A673 (cell line): ENCODE measurements at regions of chrX and their contacts with region 1.

Region 1: GRCh38 chrX:29903360-29903759 is 312.0 kb upstream of the MAGEB2 start:
- DNase-seq: no peak
- H3K4me3 ChIP-seq: no peak overlapping the region
- H3K27ac ChIP-seq: no peak overlapping the region
- H3K4me1 ChIP-seq: no peaks in the 10 kb centered on the region
- H3K27me3 ChIP-seq: no peaks in the 10 kb centered on the region
- CTCF ChIP-seq: peak; percentile 50; the same call in 1 of the 2 replicates

Region 2: DNA sequence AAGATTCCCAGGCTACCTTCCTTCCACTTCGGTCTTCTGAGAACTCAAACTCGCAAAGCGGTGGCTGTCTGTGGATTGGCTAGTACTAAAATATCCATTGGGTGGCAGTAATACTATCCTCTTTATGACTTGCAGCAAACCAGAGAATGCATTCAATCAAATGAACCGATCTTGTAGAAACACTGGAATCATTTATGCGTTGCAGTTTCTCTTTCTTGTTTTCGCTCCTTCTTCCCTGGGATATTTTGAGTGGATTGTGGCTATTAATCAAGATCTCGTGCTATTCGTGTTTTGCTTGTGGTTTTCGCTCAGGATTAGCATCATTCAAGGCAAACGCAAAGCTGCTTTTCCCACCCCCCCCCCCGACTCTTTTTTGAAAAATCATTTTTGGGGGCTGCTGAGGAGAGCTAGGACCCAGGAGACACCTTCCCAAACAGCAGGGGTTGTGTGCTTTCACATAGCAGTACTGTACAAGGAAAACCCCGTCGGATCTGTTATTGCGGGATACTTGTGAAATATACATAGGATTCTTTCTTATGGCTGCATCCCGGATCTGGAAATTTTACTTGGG is 1316.3 kb before region 1 on chrX and contains the start of gene IL1RAPL1:
- CTCF ChIA-PET with region 1: no interaction called
- POLR2A ChIA-PET with region 1: no interaction called
- intact Hi-C with region 1: loop called (anchors 10 kb)
- DNase-seq: peak; percentile 41
- H3K4me3 ChIP-seq: peak within 1 kb of the TSS; percentile 7
- H3K27ac ChIP-seq: no peak within 1 kb of the TSS
- H3K4me1 ChIP-seq: no peaks in the 10 kb centered on the region
- H3K27me3 ChIP-seq: peaks cover 68% of the 10 kb centered on the region
- CTCF ChIP-seq: peak; percentile 40; the same call in 1 of the 2 replicates
- total RNA-seq, gene IL1RAPL1: 0.21 TPM in 1 of 2 replicates, not detected in the other

Region 3: DNA sequence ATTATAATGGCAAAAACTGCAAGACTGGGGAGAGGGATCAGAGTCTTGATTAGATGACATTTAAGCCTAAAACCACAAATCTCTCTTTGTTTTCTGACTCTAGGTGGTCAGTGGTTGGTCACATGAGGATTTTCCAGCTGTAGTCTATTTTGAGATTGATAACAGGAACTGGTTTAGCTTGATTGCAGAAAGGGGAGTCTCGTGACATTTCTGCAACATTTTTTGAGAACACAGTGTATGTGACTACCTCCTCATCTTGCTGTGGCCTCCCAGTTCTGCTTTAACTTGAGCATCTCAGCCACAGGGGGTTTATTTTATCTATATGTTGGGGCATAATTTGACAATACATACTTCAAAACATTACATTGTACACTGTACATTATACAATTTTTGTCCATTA is 414.4 kb before region 1 on chrX:
- CTCF ChIA-PET with region 1: no interaction called
- POLR2A ChIA-PET with region 1: no interaction called
- intact Hi-C with region 1: loop called (anchors 10 kb)
- DNase-seq: no peak
- H3K4me3 ChIP-seq: no peak overlapping the region
- H3K27ac ChIP-seq: no peak overlapping the region
- H3K4me1 ChIP-seq: no peaks in the 10 kb centered on the region
- H3K27me3 ChIP-seq: no peaks in the 10 kb centered on the region
- CTCF ChIP-seq: no peak

Region 4: DNA sequence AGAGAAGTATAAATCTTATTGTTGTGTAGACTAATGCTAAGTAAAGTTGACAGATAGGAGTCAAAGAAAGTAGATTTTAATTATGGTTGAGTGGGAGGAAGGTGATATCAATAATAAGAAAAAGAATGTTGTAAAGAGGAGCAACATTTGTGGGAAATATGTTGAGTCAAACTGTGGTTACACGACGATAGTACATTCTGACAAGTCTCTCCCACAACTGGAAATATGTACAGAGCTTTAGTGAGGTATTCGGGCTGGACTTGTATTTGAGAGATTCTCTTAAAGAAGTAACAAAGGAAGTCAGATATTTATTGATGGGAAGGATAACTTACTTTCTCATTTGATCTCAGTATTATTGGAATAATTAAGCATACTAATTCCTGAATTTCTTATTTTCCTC is 213.3 kb before region 1 on chrX:
- CTCF ChIA-PET with region 1: no interaction called
- POLR2A ChIA-PET with region 1: no interaction called
- intact Hi-C with region 1: loop called (anchors 5 kb)
- DNase-seq: no peak
- H3K4me3 ChIP-seq: no peak overlapping the region
- H3K27ac ChIP-seq: no peak overlapping the region
- H3K4me1 ChIP-seq: no peaks in the 10 kb centered on the region
- H3K27me3 ChIP-seq: no peaks in the 10 kb centered on the region
- CTCF ChIP-seq: no peak

Region 5: GRCh38 chrX:29728639-29729038 is 174.7 kb before region 1 on chrX:
- CTCF ChIA-PET with region 1: no interaction called
- POLR2A ChIA-PET with region 1: no interaction called
- intact Hi-C with region 1: no loop called
- DNase-seq: no peak
- H3K4me3 ChIP-seq: no peak overlapping the region
- H3K27ac ChIP-seq: no peak overlapping the region
- H3K4me1 ChIP-seq: no peaks in the 10 kb centered on the region
- H3K27me3 ChIP-seq: no peaks in the 10 kb centered on the region
- CTCF ChIP-seq: no peak

Region 6: GRCh38 chrX:30005813-30006212 is 102.5 kb after region 1 on chrX:
- CTCF ChIA-PET with region 1: no interaction called
- POLR2A ChIA-PET with region 1: no interaction called
- intact Hi-C with region 1: no loop called
- DNase-seq: no peak
- H3K4me3 ChIP-seq: no peak overlapping the region
- H3K27ac ChIP-seq: no peak overlapping the region
- H3K4me1 ChIP-seq: no peaks in the 10 kb centered on the region
- H3K27me3 ChIP-seq: no peaks in the 10 kb centered on the region
- CTCF ChIP-seq: no peak

Region 7: DNA sequence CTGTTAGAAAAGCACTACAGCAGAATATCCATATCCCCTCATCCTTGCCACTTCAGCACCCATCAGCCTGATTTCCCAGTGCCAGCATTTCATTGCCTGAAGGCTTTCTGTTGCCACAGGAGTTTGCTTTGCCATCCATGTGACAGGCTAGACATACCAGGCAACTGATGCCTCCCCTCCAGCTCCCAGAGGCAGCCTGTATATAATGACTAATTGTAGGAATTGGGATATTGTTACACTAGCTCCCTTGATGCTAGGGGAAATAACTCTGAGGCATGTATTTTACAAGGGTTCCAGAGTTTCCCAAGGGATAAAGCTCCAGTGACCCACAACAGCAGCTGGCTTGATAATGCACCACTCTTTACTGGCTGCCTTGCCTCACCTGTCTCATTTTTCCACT is 1776.5 kb after region 1 on chrX:
- CTCF ChIA-PET with region 1: no interaction called
- POLR2A ChIA-PET with region 1: no interaction called
- intact Hi-C with region 1: no loop called
- DNase-seq: no peak
- H3K4me3 ChIP-seq: no peak overlapping the region
- H3K27ac ChIP-seq: no peak overlapping the region
- H3K4me1 ChIP-seq: no peaks in the 10 kb centered on the region
- H3K27me3 ChIP-seq: no peaks in the 10 kb centered on the region
- CTCF ChIP-seq: no peak